Left lung (tissue), 14 donors: ENCODE measurements at regions of chr12 and their contacts with region 1.

Region 1: GRCh38 chr12:6069437-6070107 is 54.9 kb downstream of the VWF start:
- DNase-seq: no peak
- ATAC-seq: peak; percentile 61
- H3K4me3 ChIP-seq: no peak overlapping the region
- H3K27ac ChIP-seq: peak overlapping the region; percentile 37 to 57
- H3K4me1 ChIP-seq: peaks cover 2 to 36% of the 10 kb centered on the region in 2 donors
- H3K27me3 ChIP-seq: peaks cover 0 to 8% of the 10 kb centered on the region in 2 donors
- CTCF ChIP-seq: no peak

Region 2: DNA sequence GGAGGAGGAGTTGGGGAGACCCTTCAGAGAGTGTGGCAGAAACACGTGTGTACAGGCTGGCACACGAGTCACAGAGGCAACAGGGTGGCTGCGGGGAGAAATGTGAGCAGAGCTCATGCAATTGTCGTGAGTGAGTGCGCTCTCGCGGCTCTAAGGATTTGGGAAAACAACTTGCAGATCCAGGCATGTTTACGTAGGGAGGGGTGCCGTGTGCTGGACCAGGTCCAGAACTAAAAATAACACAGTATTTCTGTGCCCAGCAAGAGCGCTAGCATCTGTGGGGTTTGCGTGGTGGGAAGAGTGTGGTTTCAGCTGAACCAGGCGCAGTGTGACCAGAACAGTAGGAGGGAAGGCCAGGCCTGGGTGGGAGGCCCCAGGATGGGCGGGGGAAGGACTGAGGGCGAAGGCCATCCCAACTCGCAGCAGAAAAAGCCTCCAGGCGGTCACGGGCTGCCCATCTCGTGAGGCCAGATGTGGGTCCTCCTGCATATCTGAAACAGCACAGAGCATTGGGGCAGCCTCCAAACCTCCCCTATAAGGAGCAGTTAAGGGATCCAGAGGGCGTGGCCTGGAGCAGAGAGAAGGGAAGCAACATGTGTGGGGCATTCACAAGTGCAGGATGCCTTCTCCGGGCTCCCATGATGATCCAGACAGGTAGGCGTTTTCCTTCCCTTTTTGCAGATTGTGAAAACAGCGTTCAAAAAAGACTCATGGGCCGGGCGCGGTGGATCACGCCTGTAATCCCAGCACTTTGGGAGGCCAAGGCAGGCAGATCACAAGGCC is 112.7 kb after region 1 on chr12:
- intact Hi-C with region 1: loop called in 1 of 2 experiments (anchors 10 kb)
- DNase-seq: peak in 3 of 4 donors; percentile 79 to 82 (median 82)
- ATAC-seq: peak; percentile 72
- H3K4me3 ChIP-seq: no peak overlapping the region
- H3K27ac ChIP-seq: peak overlapping the region; percentile 54 to 84
- H3K4me1 ChIP-seq: peaks cover 24 to 55% of the 10 kb centered on the region in 2 donors
- H3K27me3 ChIP-seq: no peaks in the 10 kb centered on the region
- CTCF ChIP-seq: no peak